ENCODE measurements at regions of chr1 and their contacts with region 1.

Region 1: GRCh38 chr1:6602669-6603237 is at the start of gene KLHL21:
- DNase-seq: peak; percentile 65 to 93 (median 84)
- ATAC-seq: peak; percentile 48
- H3K4me3 ChIP-seq: peak within 1 kb of the TSS; percentile 95
- H3K4me3 Mint-ChIP-seq: peak within 1 kb of the TSS; percentile 100
- H3K27ac ChIP-seq: peak within 1 kb of the TSS; percentile 80 to 95
- H3K27ac Mint-ChIP-seq: peak within 1 kb of the TSS; percentile 100
- H3K4me1 ChIP-seq: peaks cover 54% of the 10 kb centered on the region
- H3K4me1 Mint-ChIP-seq: peaks cover 36% of the 10 kb centered on the region
- H3K27me3 ChIP-seq: no peaks in the 10 kb centered on the region
- H3K27me3 Mint-ChIP-seq: no peaks in the 10 kb centered on the region
- CTCF ChIP-seq: no peak
- total RNA-seq, gene KLHL21: 32.0 to 33.5 TPM

Region 2: GRCh38 chr1:6579374-6580118 is 23.2 kb before region 1 on chr1 and contains the start of gene ZBTB48:
- CTCF ChIA-PET with region 1: interaction called, 4 read pairs
- POLR2A ChIA-PET with region 1: interaction called, 139 read pairs
- intact Hi-C with region 1: loop called (anchors 1 to 2 kb)
- DNase-seq: peak; percentile 91 to 99 (median 96)
- ATAC-seq: peak; percentile 99
- H3K4me3 ChIP-seq: peak within 1 kb of the TSS; percentile 87
- H3K4me3 Mint-ChIP-seq: peak within 1 kb of the TSS; percentile 98
- H3K27ac ChIP-seq: peak within 1 kb of the TSS; percentile 79 to 82
- H3K27ac Mint-ChIP-seq: peak within 1 kb of the TSS; percentile 93
- H3K4me1 ChIP-seq: peaks cover 36% of the 10 kb centered on the region
- H3K4me1 Mint-ChIP-seq: peaks cover 34% of the 10 kb centered on the region
- H3K27me3 ChIP-seq: peaks cover 0 to 3% of the 10 kb centered on the region in 2 experiments
- H3K27me3 Mint-ChIP-seq: no peaks in the 10 kb centered on the region
- CTCF ChIP-seq: no peak
- total RNA-seq, gene ZBTB48: 31.4 to 31.7 TPM

Region 3: GRCh38 chr1:6613361-6614018 is 10.7 kb after region 1 on chr1 and contains the start of gene PHF13:
- CTCF ChIA-PET with region 1: interaction called, 8 read pairs
- POLR2A ChIA-PET with region 1: interaction called, 59 read pairs
- intact Hi-C with region 1: loop called (anchors 1 kb)
- DNase-seq: peak; percentile 97 to 100 (median 99)
- ATAC-seq: peak; percentile 94
- H3K4me3 ChIP-seq: peak within 1 kb of the TSS; percentile 65
- H3K4me3 Mint-ChIP-seq: peak within 1 kb of the TSS; percentile 98
- H3K27ac ChIP-seq: peak within 1 kb of the TSS; percentile 32 to 50
- H3K27ac Mint-ChIP-seq: peak within 1 kb of the TSS; percentile 90
- H3K4me1 ChIP-seq: peaks cover 18% of the 10 kb centered on the region
- H3K4me1 Mint-ChIP-seq: peaks cover 26% of the 10 kb centered on the region
- H3K27me3 ChIP-seq: no peaks in the 10 kb centered on the region
- H3K27me3 Mint-ChIP-seq: no peaks in the 10 kb centered on the region
- CTCF ChIP-seq: no peak
- total RNA-seq, gene PHF13: 4.0 to 4.9 TPM

Region 4: GRCh38 chr1:6646499-6647148 is 43.9 kb after region 1 on chr1:
- CTCF ChIA-PET with region 1: interaction called, 3 read pairs
- POLR2A ChIA-PET with region 1: no interaction called
- intact Hi-C with region 1: loop called in 1 of 2 experiments (anchors 5 kb)
- DNase-seq: peak in 10 of 14 experiments; percentile 7 to 70 (median 19)
- ATAC-seq: peak; percentile 71
- H3K4me3 ChIP-seq: no peak overlapping the region
- H3K4me3 Mint-ChIP-seq: no peak overlapping the region
- H3K27ac ChIP-seq: no peak overlapping the region
- H3K27ac Mint-ChIP-seq: no peak overlapping the region
- H3K4me1 ChIP-seq: peaks cover 6% of the 10 kb centered on the region
- H3K4me1 Mint-ChIP-seq: peaks cover 6% of the 10 kb centered on the region
- H3K27me3 ChIP-seq: no peaks in the 10 kb centered on the region
- H3K27me3 Mint-ChIP-seq: no peaks in the 10 kb centered on the region
- CTCF ChIP-seq: peak; percentile 70

Region 5: DNA sequence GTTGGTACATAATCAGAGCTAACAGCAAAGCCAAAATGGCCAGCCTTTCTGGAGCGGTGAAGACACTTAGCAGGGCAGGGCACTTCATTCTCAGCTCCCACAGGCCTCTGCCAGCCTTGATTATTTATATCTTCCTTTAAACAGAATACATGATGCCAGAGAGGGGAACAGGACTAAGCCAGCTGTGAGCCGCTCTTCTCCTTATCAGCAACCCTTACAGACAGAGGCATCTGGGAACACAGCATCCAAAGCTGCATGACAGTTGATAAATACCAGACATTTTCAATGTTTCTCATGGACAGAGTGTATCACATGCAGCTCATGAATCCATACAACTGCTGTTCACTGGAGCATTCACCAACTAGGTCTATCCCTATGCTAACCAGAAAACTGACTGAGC is 69.8 kb after region 1 on chr1:
- CTCF ChIA-PET with region 1: no interaction called
- POLR2A ChIA-PET with region 1: no interaction called
- intact Hi-C with region 1: no loop called
- DNase-seq: no peak
- ATAC-seq: no peak
- H3K4me3 ChIP-seq: no peak overlapping the region
- H3K4me3 Mint-ChIP-seq: no peak overlapping the region
- H3K27ac ChIP-seq: no peak overlapping the region
- H3K27ac Mint-ChIP-seq: no peak overlapping the region
- H3K4me1 ChIP-seq: no peaks in the 10 kb centered on the region
- H3K4me1 Mint-ChIP-seq: no peaks in the 10 kb centered on the region
- H3K27me3 ChIP-seq: no peaks in the 10 kb centered on the region
- H3K27me3 Mint-ChIP-seq: no peaks in the 10 kb centered on the region
- CTCF ChIP-seq: no peak